PC-9 (cell line): ENCODE measurements at regions of chr20 and their contacts with region 1.

Region 1: DNA sequence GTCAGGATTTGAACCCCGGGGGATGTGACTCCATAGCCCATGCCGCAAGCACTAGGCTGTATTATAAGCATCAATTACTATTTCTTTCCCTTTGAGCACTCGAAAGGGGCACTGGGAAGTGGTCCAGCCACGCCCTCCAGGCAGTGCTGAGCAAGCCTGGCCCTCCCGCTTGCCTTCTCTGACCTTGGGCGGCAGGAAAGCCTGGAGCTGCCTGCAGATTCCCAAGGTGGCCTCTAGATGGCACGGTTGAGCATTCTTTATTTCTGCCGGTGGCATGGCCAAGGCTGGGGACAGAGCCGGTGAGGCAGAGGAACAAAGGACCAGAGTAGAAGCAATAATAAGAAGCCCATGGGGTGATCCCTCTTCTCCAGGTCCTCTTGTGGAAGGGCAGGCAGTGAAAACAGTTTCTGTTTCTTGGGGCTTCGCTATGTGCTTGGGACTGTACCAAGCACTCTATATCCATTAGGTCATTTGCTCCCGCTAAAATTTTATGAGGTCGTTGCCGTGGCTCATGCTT is 32.0 kb downstream of the ARHGAP40 start:
- DNase-seq: peak in 1 of 2 experiments; percentile 52
- H3K4me3 ChIP-seq: no peak overlapping the region
- H3K27ac ChIP-seq: no peak overlapping the region
- H3K4me1 ChIP-seq: peaks cover 20% of the 10 kb centered on the region
- H3K27me3 ChIP-seq: no peaks in the 10 kb centered on the region
- CTCF ChIP-seq: peak; percentile 95

Region 2: DNA sequence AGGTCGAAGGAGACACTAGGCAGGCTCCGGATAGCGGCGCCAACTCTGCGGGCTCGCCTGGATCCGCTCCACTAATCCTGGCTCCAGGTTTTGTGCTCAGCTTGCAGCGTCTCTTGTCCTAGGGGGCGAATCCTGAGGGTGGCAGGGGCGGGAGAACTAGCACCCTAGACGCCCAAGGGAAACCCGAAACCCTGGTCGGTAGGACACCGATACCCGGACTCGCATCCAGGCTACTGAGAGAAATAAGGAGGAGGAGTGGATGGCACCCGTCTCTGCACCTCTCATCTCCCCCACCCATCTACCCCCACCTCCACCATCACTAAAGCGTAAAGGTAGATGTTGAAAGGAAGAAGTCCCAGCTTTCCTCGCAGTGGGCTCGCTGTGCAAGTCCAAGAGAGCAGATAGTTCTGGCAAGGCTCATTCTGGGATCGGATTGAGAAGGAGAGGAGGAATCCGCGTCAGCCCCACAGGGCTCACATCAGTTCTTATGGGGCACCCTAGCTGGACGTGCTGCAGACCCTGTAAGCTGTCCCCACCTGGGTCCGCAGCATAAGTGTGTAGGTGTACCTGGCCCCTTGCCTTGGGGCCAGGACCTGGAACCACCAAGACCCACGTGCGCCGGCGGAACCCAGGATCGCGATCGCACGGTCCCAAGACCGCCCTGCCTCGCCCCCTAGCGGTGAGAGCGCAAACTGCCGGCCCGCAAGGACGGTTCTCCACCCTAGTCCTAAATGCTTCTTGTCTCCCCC is 97.5 kb after region 1 on chr20:
- CTCF ChIA-PET with region 1: no interaction called
- POLR2A ChIA-PET with region 1: no interaction called
- intact Hi-C with region 1: loop called (anchors 5 kb)
- DNase-seq: peak in 1 of 2 experiments; percentile 38
- H3K4me3 ChIP-seq: no peak overlapping the region
- H3K27ac ChIP-seq: no peak overlapping the region
- H3K4me1 ChIP-seq: no peaks in the 10 kb centered on the region
- H3K27me3 ChIP-seq: peaks cover 82% of the 10 kb centered on the region
- CTCF ChIP-seq: peak; percentile 96

Region 3: DNA sequence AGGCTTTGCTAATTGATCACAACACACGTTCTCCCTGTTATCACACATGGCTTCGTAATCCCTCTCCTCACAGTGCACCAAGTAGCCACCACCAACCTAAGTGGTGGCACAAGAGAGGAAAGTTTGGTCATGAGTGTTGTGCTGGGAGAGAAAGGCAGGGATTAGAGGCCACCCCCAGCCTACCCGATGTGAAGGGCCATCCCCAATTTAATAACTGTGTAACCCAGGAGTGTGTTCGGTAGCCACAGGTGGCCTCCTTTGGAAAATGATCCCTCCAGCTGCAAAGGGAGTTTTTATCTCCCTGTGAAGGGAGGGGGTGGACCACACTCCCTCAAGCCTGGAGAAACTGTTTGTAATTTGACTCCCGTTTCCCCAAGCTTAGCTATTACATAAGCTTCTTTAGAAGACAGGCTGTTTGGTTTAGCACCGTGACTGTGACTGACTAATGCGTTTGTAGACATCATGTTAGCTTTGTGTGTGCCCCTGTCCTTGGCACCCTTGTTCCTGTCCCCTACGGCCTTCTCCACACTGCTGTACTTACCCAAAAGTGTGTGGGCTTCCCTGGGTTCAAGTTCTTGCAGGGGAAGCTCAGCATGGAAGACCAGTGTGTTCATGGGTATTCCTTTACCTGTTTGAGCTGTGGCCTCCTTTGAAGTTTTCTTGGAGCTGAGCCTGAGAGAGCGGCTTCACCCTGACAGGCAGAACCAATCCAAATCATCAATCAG is 192.4 kb after region 1 on chr20:
- CTCF ChIA-PET with region 1: no interaction called
- POLR2A ChIA-PET with region 1: interaction called, 10 read pairs
- intact Hi-C with region 1: no loop called
- DNase-seq: peak; percentile 41 to 85
- H3K4me3 ChIP-seq: no peak overlapping the region
- H3K27ac ChIP-seq: peak overlapping the region; percentile 44
- H3K4me1 ChIP-seq: peaks cover 46% of the 10 kb centered on the region
- H3K27me3 ChIP-seq: peaks cover 5% of the 10 kb centered on the region; the same call in 1 of the 2 replicates
- CTCF ChIP-seq: no peak

Region 4: DNA sequence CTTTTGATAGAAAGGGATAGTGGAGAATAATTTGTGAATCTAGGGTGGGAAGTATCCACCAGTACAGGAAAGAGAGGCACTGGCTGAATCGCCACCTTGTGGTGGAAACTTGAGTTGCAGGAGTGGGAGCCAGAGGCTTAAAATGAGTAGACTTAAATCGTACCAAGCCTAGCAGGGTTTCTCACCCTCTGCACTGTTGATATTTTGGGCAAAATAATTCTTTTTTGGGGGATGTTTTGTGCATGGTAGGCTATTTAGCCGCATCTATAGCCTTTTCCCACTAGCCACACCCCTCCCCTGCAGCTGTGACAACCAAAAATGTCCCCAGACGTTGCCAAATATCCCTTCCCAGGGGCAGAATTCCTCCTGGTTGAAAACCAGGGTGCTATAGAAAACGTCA is 447.6 kb after region 1 on chr20:
- CTCF ChIA-PET with region 1: interaction called, 10 read pairs
- POLR2A ChIA-PET with region 1: no interaction called
- intact Hi-C with region 1: no loop called
- DNase-seq: peak; percentile 50 to 70
- H3K4me3 ChIP-seq: no peak overlapping the region
- H3K27ac ChIP-seq: no peak overlapping the region
- H3K4me1 ChIP-seq: no peaks in the 10 kb centered on the region
- H3K27me3 ChIP-seq: peaks cover 76% of the 10 kb centered on the region
- CTCF ChIP-seq: peak; percentile 97

Region 5: GRCh38 chr20:39289316-39289715 is 655.7 kb after region 1 on chr20:
- CTCF ChIA-PET with region 1: no interaction called
- POLR2A ChIA-PET with region 1: no interaction called
- intact Hi-C with region 1: no loop called
- DNase-seq: no peak
- H3K4me3 ChIP-seq: no peak overlapping the region
- H3K27ac ChIP-seq: no peak overlapping the region
- H3K4me1 ChIP-seq: no peaks in the 10 kb centered on the region
- H3K27me3 ChIP-seq: no peaks in the 10 kb centered on the region
- CTCF ChIP-seq: peak; percentile 35; the same call in 1 of the 2 replicates